ENCODE measurements at regions of chr9 and their contacts with region 1.

Region 1: DNA sequence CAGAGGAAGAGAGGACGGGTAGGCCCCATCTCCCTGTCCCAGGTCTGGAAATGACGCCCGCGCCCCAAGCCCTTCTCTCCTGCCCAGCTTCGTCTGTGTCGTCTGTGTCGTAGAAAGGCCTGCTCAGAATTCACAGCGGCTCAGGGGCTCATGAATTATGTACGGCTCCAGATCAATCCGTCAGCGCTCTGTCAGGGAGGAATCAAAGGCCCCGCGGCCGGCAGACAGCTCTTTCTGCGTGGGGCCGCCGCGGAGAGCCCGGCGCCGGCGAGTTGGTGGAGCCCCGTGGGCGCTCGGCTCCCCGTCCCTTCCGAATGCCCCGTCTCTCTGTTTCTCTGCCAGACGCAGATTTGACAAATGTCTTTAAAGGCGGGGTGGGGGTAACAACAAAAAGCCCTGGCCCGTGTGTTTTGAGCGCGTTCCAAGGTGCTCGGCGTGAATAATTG is 83.8 kb upstream of the RAPGEF1 start:
- DNase-seq: no peak
- H3K4me3 ChIP-seq: no peak overlapping the region
- H3K27ac ChIP-seq: no peak overlapping the region
- H3K4me1 ChIP-seq: no peaks in the 10 kb centered on the region
- H3K27me3 ChIP-seq: peaks cover 0 to 64% of the 10 kb centered on the region in 2 donors
- CTCF ChIP-seq: no peak
- POLR2A ChIP-seq: no peak

Region 2: GRCh38 chr9:131060900-131061630 is 762.7 kb before region 1 on chr9:
- intact Hi-C with region 1: no loop called
- DNase-seq: no peak
- H3K4me3 ChIP-seq: no peak overlapping the region
- H3K27ac ChIP-seq: no peak overlapping the region
- H3K4me1 ChIP-seq: no peaks in the 10 kb centered on the region
- H3K27me3 ChIP-seq: no peaks in the 10 kb centered on the region
- CTCF ChIP-seq: no peak
- POLR2A ChIP-seq: no peak

Region 3: DNA sequence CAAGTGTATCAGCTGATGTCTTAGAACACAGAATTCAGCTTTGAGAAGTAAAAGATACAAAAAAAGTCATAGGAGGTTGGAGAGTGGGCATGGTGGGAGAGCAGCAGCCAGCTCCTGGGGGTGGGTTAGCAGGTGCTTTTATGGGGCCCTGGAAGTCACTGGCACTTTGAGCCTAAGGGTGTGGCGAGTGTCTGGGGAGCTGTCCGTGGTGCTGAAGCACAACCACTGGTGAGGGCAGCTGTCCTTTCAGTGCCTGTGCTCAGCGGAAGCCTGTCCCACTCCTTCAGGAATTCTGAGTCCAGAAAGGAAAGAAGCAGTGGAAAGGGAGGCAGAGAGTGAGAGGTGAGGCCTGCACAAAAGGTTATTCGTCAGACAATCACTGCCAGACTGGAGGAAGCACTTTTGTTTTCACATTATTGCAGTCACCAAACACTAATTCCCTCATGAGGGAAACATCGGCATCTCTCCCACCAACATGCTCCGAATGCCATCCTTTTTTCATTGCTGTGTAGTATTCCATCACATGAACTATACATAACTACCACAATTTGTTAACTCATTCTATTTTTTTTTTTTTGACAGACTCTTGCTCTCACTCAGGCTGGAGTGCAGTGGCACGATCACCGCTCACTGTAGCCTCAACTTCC is 24.4 kb before region 1 on chr9:
- intact Hi-C with region 1: no loop called
- DNase-seq: no peak
- H3K4me3 ChIP-seq: no peak overlapping the region
- H3K27ac ChIP-seq: no peak overlapping the region
- H3K4me1 ChIP-seq: no peaks in the 10 kb centered on the region
- H3K27me3 ChIP-seq: peaks cover 0 to 27% of the 10 kb centered on the region in 2 donors
- CTCF ChIP-seq: no peak
- POLR2A ChIP-seq: no peak

Region 4: GRCh38 chr9:131848570-131849160 is 24.9 kb after region 1 on chr9:
- intact Hi-C with region 1: loop called (anchors 1 kb)
- DNase-seq: no peak
- H3K4me3 ChIP-seq: no peak overlapping the region
- H3K27ac ChIP-seq: no peak overlapping the region
- H3K4me1 ChIP-seq: no peaks in the 10 kb centered on the region
- H3K27me3 ChIP-seq: no peaks in the 10 kb centered on the region
- CTCF ChIP-seq: no peak
- POLR2A ChIP-seq: no peak

Measured in breast epithelium (tissue), 4 donors.